Endothelial cell of umbilical vein (primary cell): ENCODE measurements at regions of chr7 and their contacts with region 1.

Region 1: DNA sequence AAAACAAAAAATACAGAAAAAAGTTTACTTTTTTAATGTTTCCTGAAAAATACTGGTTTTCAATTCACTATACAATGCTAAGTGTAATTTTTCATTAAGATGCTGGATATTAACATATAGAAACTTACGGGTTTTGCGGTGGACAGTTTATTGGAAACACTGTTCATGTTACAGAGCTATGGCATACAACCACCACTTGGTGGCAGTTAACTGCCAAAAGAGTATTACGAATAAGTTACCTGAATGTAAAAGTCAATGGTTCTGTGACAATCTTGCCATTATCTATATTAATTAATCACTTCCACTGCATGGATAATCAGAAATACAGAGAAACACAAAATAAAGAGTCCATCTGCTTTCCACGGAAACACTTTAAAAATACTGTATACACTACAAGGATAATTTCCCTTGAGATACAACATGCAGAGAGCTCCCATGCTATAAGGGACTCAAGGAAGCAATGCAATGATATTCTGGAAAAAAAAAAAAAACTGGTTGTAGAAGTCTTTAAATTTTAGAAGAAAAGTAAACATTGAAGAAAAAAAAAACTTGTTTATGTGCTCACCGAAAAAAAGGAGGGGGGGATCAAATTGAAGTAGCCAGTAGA is 97.0 kb downstream of the TPK1 start:
- DNase-seq: peak; percentile 63
- H3K4me3 ChIP-seq: no peak overlapping the region
- H3K27ac ChIP-seq: no peak overlapping the region
- H3K4me1 ChIP-seq: no peaks in the 10 kb centered on the region
- H3K27me3 ChIP-seq: no peaks in the 10 kb centered on the region
- CTCF ChIP-seq: peak; percentile 40 to 61
- POLR2A ChIP-seq: no peak

Region 2: DNA sequence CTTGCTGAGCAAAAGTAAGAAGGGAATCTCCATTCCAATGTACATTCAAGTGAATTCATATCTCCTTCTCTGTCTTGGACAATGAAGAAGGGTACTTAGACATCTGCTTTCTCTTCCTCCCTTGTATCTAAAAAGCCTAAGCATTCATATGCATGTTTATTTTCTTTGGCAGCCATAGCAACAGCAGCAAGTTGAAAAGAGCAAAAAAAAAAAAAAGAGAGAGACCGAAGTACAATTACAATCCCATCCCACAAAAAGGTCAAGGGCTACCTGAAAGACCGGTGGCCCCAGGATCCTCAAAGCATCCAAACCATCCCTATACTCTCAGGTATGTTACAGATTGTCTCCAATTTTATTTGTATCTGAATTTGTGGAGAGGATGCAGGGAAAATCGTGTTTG is 780.0 kb before region 1 on chr7:
- CTCF ChIA-PET with region 1: no interaction called
- POLR2A ChIA-PET with region 1: no interaction called
- dilution Hi-C with region 1: no loop called
- intact Hi-C with region 1: no loop called
- DNase-seq: no peak
- H3K4me3 ChIP-seq: no peak overlapping the region
- H3K27ac ChIP-seq: no peak overlapping the region
- H3K4me1 ChIP-seq: no peaks in the 10 kb centered on the region
- H3K27me3 ChIP-seq: peaks cover 4 to 8% of the 10 kb centered on the region in 2 experiments
- CTCF ChIP-seq: no peak
- POLR2A ChIP-seq: no peak

Region 3: GRCh38 chr7:144606261-144606660 is 132.6 kb before region 1 on chr7:
- CTCF ChIA-PET with region 1: no interaction called
- POLR2A ChIA-PET with region 1: no interaction called
- dilution Hi-C with region 1: no loop called
- intact Hi-C with region 1: no loop called
- DNase-seq: no peak
- H3K4me3 ChIP-seq: no peak overlapping the region
- H3K27ac ChIP-seq: no peak overlapping the region
- H3K4me1 ChIP-seq: no peaks in the 10 kb centered on the region
- H3K27me3 ChIP-seq: no peaks in the 10 kb centered on the region
- CTCF ChIP-seq: no peak
- POLR2A ChIP-seq: no peak

Region 4: GRCh38 chr7:144670218-144670617 is 68.6 kb before region 1 on chr7:
- CTCF ChIA-PET with region 1: interaction called, 13 read pairs
- POLR2A ChIA-PET with region 1: no interaction called
- dilution Hi-C with region 1: no loop called
- intact Hi-C with region 1: no loop called
- DNase-seq: peak; percentile 21
- H3K4me3 ChIP-seq: no peak overlapping the region
- H3K27ac ChIP-seq: no peak overlapping the region
- H3K4me1 ChIP-seq: no peaks in the 10 kb centered on the region
- H3K27me3 ChIP-seq: no peaks in the 10 kb centered on the region
- CTCF ChIP-seq: no peak
- POLR2A ChIP-seq: no peak

Region 5: DNA sequence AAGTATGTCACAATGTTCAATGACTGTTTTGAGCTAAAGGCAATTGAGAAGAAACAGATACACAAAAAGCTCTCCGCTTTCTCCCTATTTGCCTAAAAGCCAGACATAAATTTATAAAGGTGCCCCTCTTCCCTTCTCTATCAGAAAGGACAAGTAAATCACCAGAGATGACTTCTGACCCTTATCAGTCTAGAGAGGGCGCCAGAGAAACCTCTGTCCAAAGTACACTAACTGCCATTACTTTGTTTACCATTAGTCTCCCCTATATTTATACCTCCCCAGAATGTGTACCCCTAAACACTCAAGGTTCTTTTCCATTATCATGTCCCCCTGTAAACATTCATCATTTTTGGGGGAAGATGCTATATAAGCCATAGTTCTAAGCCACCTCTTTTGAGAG is 47.7 kb after region 1 on chr7:
- CTCF ChIA-PET with region 1: interaction called, 58 read pairs
- POLR2A ChIA-PET with region 1: no interaction called
- dilution Hi-C with region 1: no loop called
- intact Hi-C with region 1: loop called (anchors 2 kb)
- DNase-seq: no peak
- H3K4me3 ChIP-seq: no peak overlapping the region
- H3K27ac ChIP-seq: no peak overlapping the region
- H3K4me1 ChIP-seq: no peaks in the 10 kb centered on the region
- H3K27me3 ChIP-seq: no peaks in the 10 kb centered on the region
- CTCF ChIP-seq: no peak
- POLR2A ChIP-seq: no peak

Region 6: GRCh38 chr7:144827621-144828020 is 88.8 kb after region 1 on chr7:
- CTCF ChIA-PET with region 1: interaction called, 76 read pairs
- POLR2A ChIA-PET with region 1: no interaction called
- dilution Hi-C with region 1: no loop called
- intact Hi-C with region 1: no loop called
- DNase-seq: peak; percentile 86
- H3K4me3 ChIP-seq: no peak overlapping the region
- H3K27ac ChIP-seq: peak overlapping the region; percentile 15
- H3K4me1 ChIP-seq: peaks cover 21% of the 10 kb centered on the region
- H3K27me3 ChIP-seq: no peaks in the 10 kb centered on the region
- CTCF ChIP-seq: no peak
- POLR2A ChIP-seq: no peak

Region 7: DNA sequence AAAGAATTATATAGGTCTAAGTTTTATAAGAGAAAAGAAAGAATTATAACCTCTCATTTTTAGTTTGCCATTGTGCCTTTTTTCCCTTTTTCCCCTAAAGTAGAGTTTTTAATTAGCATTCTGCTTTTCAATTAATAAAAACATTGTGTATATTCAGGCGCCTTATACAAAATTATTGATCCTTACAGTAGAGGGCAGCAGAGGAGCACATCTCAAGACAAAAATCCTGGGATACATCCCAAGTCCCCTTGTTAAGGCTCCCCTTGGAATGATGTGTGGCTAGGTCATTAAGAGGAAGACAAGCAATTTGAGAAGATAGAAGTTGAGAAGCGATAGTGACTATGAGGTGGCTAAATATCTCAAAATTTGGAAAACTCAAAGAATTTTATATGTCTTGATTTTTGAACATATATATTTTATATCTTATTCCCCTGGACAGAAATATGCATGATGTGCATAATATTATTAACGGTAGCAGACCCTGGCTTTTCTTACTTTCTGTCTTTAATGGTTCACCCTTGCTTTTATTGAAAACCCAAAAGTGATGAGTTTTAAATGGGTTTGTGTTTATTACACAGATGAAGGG is 116.1 kb after region 1 on chr7:
- CTCF ChIA-PET with region 1: interaction called, 42 read pairs
- POLR2A ChIA-PET with region 1: no interaction called
- dilution Hi-C with region 1: no loop called
- intact Hi-C with region 1: loop called (anchors 2 kb)
- DNase-seq: peak; percentile 40
- H3K4me3 ChIP-seq: no peak overlapping the region
- H3K27ac ChIP-seq: no peak overlapping the region
- H3K4me1 ChIP-seq: no peaks in the 10 kb centered on the region
- H3K27me3 ChIP-seq: peaks cover 0 to 2% of the 10 kb centered on the region in 2 experiments
- CTCF ChIP-seq: peak; percentile 26 to 43
- POLR2A ChIP-seq: no peak